Activated naive CD4-positive, alpha-beta T cell treated with anti-CD3 and anti-CD28 coated beads for 36 hours (primary cell): ENCODE measurements at regions of chr1 and their contacts with region 1.

Region 1: GRCh38 chr1:90729504-90730242 is 12.6 kb upstream of the BARHL2 start:
- DNase-seq: no peak
- H3K4me3 Mint-ChIP-seq: peak overlapping the region; percentile 23
- H3K27ac Mint-ChIP-seq: no peak overlapping the region
- H3K4me1 Mint-ChIP-seq: peaks cover 46% of the 10 kb centered on the region
- H3K27me3 Mint-ChIP-seq: peaks cover 83% of the 10 kb centered on the region

Region 2: GRCh38 chr1:90402893-90403849 is 326.5 kb before region 1 on chr1:
- CTCF ChIA-PET with region 1: no interaction called
- intact Hi-C with region 1: no loop called
- DNase-seq: no peak
- H3K4me3 Mint-ChIP-seq: no peak overlapping the region
- H3K27ac Mint-ChIP-seq: no peak overlapping the region
- H3K4me1 Mint-ChIP-seq: no peaks in the 10 kb centered on the region
- H3K27me3 Mint-ChIP-seq: no peaks in the 10 kb centered on the region

Region 3: DNA sequence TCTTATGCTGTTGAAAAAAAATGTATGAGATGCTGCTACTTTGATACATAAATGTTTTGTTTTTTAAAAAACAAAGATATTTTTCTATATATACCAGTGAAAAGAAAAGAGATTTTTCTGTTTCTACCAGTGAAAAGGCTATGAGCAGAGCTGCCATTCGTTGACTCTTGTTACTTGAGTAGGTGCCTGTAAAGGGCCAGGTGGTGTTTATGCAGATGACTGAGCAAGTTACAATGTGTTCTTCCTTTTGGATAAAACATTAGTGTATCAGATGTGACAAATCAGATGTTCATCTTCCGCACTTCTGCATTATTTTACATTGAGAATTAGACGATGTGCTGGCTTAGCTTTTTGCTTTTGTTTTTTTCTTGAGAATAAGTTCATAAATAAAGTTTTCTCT is 57.9 kb before region 1 on chr1:
- CTCF ChIA-PET with region 1: no interaction called
- intact Hi-C with region 1: no loop called
- DNase-seq: no peak
- H3K4me3 Mint-ChIP-seq: no peak overlapping the region
- H3K27ac Mint-ChIP-seq: no peak overlapping the region
- H3K4me1 Mint-ChIP-seq: no peaks in the 10 kb centered on the region
- H3K27me3 Mint-ChIP-seq: peaks cover 17% of the 10 kb centered on the region

Region 4: DNA sequence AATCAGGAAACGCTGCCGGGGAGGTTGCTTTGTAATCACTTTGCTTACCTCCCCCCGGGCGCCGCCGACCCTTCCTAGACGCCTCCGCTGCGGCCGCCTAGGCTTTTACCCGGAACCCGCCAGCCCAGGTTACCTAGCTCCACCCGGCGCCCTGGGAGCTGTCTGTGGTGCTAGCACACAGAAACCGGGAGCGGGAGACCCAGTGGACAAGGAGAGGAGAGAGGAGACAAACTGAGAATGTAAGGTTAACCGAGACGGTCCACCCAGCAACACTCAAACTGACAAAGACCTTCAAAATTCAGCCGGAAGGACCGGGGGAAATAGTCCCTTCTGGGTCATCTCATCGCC is 22.3 kb before region 1 on chr1:
- CTCF ChIA-PET with region 1: interaction called, 4 read pairs
- intact Hi-C with region 1: loop called (anchors 1 kb)
- DNase-seq: peak; percentile 44
- H3K4me3 Mint-ChIP-seq: peak overlapping the region; percentile 56
- H3K27ac Mint-ChIP-seq: no peak overlapping the region
- H3K4me1 Mint-ChIP-seq: peaks cover 12% of the 10 kb centered on the region
- H3K27me3 Mint-ChIP-seq: peaks cover 80% of the 10 kb centered on the region

Region 5: DNA sequence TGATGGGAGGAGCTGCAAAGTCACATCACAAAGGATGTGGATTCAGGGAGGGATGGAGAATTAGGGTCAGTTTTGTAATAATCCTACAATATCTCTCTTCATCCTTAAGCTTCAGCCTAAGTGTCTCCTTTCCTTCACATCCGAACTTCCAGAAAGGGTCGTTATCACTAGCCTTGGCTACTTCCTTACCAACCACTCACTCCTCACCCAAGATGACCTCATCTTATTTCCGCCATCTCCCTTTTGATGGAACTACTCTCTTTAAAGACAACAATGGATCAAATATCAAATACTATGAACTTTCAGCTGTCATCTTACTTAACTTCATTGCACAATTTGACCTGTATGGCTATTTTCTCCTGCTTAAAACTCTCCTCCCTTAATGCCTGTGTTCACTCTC is 57.0 kb after region 1 on chr1:
- CTCF ChIA-PET with region 1: no interaction called
- intact Hi-C with region 1: no loop called
- DNase-seq: no peak
- H3K4me3 Mint-ChIP-seq: no peak overlapping the region
- H3K27ac Mint-ChIP-seq: no peak overlapping the region
- H3K4me1 Mint-ChIP-seq: no peaks in the 10 kb centered on the region
- H3K27me3 Mint-ChIP-seq: peaks cover 18% of the 10 kb centered on the region

Region 6: DNA sequence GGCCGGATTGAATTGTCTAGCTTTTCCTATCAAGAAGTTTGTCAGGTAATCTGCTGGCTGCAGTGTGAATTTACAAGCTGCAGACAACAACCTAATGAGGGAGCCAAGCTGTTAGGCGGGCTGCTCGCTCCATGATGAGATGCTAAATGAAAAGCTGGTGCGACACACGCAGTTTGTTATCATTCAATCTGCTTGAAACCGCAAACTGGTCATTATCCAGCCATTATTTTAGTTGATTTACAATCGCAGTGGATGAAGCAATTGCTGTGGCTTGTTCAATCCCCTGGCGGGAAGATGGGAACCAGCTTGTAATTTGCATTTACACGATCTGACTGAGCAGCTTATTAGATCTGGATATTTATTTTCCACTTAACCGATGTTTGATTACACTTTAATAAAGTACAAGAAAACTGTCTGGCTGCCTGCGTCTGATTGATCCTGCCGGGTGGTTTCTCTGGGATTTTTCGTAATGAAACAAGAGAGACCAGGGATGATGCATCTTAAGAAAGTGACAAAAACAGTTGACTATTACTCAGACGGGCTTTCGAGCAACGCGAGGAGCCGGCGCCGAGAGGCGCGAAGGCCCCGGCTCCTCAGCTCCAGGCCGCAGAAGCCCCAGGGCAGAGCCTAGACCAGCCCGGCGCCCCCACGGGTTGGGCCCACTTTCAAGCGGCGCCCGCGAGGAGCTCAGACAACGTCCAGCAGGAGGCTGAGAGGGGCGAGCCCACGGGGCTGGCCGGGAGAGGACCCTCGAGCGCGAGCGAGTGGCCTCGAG is 105.4 kb after region 1 on chr1:
- CTCF ChIA-PET with region 1: no interaction called
- intact Hi-C with region 1: loop called (anchors 2 kb)
- DNase-seq: peak; percentile 49
- H3K4me3 Mint-ChIP-seq: no peak overlapping the region
- H3K27ac Mint-ChIP-seq: no peak overlapping the region
- H3K4me1 Mint-ChIP-seq: peaks cover 21% of the 10 kb centered on the region
- H3K27me3 Mint-ChIP-seq: peaks cover 77% of the 10 kb centered on the region

Region 7: DNA sequence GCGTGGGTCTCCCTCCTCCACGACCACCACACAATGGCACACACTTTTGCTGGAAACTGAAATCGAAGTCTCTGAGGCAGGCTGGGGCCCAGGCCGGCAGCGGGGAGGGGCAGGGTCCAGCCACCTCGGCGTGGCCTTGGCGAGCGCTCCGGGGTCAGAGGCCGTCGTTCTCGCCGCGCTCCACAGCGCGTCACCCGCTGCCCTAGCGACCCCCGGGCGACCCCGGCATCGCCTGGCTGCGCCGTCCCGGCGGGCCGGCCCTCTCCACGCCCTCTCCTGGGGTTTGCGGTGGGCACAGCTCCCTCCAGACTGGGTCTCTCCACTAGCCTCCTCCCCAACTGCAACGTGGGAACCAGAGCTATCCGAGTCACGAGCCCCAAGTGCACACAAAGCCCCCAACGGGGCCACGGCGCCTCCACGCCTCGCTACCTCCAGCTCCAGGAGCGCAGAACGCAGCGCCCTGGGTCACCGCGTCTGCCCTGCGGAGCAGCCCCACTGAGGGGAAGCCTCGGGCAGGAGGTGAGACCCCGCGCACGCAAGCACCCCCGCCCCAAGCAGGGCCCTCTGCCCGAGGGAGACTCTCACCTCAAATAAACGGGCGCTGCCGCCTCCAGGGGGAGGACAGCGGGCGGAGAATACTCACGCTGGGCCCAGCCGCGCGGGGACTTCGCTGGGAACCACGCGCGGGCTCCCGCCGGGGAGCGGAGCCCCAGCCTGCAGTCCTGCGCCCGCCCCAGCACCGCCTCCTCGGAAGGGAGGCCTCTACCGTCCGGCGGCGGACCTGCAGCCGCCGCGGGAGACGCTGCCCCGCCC is 121.4 kb after region 1 on chr1:
- CTCF ChIA-PET with region 1: interaction called, 3 read pairs
- intact Hi-C with region 1: loop called (anchors 5 kb)
- DNase-seq: peak; percentile 79
- H3K4me3 Mint-ChIP-seq: peak overlapping the region; percentile 69
- H3K27ac Mint-ChIP-seq: no peak overlapping the region
- H3K4me1 Mint-ChIP-seq: peaks cover 12% of the 10 kb centered on the region
- H3K27me3 Mint-ChIP-seq: peaks cover 39% of the 10 kb centered on the region

Region 8: DNA sequence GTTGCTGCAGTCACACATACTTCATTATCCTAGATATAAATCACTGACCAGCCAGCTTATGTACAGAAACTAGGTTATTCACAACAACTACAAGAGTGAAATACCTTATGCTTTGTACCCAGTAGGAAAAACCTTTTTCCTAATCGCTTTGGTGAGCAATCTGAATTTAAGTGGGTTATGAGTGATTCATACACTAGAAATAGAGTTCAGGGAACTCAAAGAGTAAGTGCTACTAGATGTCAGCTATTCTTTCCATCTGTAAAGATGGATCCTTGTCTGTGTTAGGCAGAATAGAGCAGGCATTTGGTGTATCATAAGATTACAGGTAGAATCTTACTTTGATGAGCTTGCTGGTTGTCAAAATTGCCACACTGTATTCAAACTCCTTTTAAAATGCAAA is 190.2 kb after region 1 on chr1:
- CTCF ChIA-PET with region 1: no interaction called
- intact Hi-C with region 1: no loop called
- DNase-seq: no peak
- H3K4me3 Mint-ChIP-seq: no peak overlapping the region
- H3K27ac Mint-ChIP-seq: no peak overlapping the region
- H3K4me1 Mint-ChIP-seq: peaks cover 49% of the 10 kb centered on the region
- H3K27me3 Mint-ChIP-seq: no peaks in the 10 kb centered on the region